Stomach (tissue), 19 donors: ENCODE measurements at regions of chr5 and their contacts with region 1.

Region 1: GRCh38 chr5:6623941-6624340 is 8.9 kb downstream of the NSUN2 start:
- DNase-seq: no peak
- H3K4me3 ChIP-seq: no peak overlapping the region
- H3K27ac ChIP-seq: no peak overlapping the region
- H3K4me1 ChIP-seq: no peaks in the 10 kb centered on the region
- H3K27me3 ChIP-seq: no peaks in the 10 kb centered on the region
- CTCF ChIP-seq: no peak
- EP300 ChIP-seq: no peak
- POLR2A ChIP-seq: no peak

Region 2: DNA sequence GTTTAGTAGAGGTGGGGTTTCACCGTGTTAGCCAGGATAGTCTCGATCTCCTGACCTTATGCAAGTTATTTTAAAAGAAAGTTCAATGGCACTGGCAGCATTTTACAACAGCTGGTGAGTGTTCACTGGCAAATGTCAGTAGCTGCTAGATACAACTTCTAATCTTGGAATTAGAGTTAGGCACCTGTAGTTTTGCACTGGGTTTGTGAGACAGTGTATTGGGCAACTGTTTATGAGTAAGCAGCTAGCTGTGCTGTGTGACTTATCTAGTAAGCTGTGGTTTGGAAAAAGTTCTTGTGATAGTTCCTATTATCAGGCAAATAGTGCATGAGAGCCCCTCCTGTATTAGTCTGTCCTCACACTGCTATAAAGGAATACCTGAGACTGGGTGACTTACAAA is 113.8 kb before region 1 on chr5:
- intact Hi-C with region 1: no loop called
- DNase-seq: no peak
- H3K4me3 ChIP-seq: no peak overlapping the region
- H3K27ac ChIP-seq: no peak overlapping the region
- H3K4me1 ChIP-seq: no peaks in the 10 kb centered on the region
- H3K27me3 ChIP-seq: no peaks in the 10 kb centered on the region
- CTCF ChIP-seq: no peak
- EP300 ChIP-seq: no peak
- POLR2A ChIP-seq: no peak

Region 3: DNA sequence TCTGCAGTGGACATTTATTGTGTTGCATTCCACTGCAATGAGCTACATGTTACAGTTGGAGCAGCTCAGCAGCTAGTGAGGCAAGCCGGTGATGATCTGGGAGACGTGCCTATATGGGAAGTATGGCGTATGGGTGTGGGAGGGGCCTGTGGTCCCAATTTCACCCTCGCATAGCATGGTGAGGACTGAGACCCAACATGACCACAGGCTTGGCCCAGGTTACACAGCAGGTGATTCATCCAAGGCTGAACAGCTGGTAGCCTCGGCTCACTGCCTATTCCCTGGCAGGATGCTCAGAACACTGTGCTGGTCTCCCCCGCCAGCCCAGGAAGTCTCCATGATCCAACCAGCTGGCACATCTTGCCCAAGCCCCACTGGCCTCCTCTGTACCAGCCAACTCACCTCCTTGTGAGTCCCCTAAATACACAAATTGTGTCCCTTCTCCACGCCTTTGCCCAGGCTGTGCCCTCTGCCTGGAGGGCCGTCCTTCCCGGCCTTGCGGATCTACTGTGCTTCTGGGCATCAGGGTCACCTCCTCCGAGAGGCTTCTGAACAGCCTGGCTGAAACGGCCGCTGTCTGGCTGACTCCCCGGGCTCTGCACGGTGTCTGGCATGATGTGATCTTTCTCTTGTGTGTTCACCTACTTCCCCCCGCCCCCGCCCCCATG is 72.5 kb before region 1 on chr5:
- intact Hi-C with region 1: no loop called
- DNase-seq: no peak
- H3K4me3 ChIP-seq: no peak overlapping the region
- H3K27ac ChIP-seq: no peak overlapping the region
- H3K4me1 ChIP-seq: no peaks in the 10 kb centered on the region
- H3K27me3 ChIP-seq: peaks cover 0 to 13% (median 0%) of the 10 kb centered on the region in 3 donors
- CTCF ChIP-seq: no peak
- EP300 ChIP-seq: no peak
- POLR2A ChIP-seq: no peak

Region 4: DNA sequence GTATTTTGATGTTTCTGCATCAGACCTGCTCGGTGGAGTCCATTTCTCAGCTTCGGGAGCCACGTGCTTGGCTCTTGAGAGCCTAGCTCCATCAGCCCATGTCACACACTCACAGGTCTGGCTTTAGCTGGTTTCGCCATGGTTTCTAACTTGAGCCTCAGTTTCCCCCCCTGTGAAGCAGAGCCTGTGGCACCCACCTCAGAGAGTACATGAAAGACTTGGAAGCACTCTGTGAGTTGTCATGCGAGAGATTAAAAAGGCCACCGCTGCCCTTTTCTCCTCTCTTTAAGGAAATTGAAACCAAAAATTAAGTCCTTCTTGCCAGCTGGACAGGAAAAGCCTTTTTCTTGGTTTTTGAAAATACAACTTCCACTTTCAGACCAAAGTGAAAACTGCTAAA is 98.1 kb after region 1 on chr5:
- intact Hi-C with region 1: no loop called
- DNase-seq: no peak
- H3K4me3 ChIP-seq: peak overlapping the region; percentile 19 to 35 (median 25)
- H3K27ac ChIP-seq: peak overlapping the region in 4 of 5 donors; percentile 46 to 74 (median 68)
- H3K4me1 ChIP-seq: peaks cover 55 to 99% (median 79%) of the 10 kb centered on the region in 4 donors
- H3K27me3 ChIP-seq: no peaks in the 10 kb centered on the region
- CTCF ChIP-seq: no peak
- EP300 ChIP-seq: no peak
- POLR2A ChIP-seq: no peak

Region 5: DNA sequence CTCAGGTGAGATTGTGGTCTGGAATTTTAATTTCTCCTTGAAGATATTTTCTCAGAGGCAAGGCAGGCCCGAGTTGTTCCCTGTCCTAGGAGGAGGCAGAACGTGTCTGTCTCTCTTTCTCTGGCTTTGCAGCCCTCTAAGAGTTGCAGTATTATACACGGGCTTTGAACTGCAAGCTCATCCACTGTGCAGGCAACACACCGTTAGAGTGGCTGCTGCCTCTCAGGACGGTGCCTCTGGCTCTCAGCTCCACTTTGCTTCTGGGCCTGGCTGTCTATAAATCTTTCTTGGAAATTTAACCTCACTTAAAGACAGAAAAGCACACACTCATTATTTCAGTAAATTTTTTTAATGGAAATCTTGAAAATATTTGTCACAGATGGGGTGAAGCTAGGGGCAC is 601.9 kb after region 1 on chr5:
- intact Hi-C with region 1: no loop called
- DNase-seq: no peak
- H3K4me3 ChIP-seq: no peak overlapping the region
- H3K27ac ChIP-seq: no peak overlapping the region
- H3K4me1 ChIP-seq: no peaks in the 10 kb centered on the region
- H3K27me3 ChIP-seq: no peaks in the 10 kb centered on the region
- CTCF ChIP-seq: no peak
- EP300 ChIP-seq: no peak
- POLR2A ChIP-seq: no peak

Region 6: DNA sequence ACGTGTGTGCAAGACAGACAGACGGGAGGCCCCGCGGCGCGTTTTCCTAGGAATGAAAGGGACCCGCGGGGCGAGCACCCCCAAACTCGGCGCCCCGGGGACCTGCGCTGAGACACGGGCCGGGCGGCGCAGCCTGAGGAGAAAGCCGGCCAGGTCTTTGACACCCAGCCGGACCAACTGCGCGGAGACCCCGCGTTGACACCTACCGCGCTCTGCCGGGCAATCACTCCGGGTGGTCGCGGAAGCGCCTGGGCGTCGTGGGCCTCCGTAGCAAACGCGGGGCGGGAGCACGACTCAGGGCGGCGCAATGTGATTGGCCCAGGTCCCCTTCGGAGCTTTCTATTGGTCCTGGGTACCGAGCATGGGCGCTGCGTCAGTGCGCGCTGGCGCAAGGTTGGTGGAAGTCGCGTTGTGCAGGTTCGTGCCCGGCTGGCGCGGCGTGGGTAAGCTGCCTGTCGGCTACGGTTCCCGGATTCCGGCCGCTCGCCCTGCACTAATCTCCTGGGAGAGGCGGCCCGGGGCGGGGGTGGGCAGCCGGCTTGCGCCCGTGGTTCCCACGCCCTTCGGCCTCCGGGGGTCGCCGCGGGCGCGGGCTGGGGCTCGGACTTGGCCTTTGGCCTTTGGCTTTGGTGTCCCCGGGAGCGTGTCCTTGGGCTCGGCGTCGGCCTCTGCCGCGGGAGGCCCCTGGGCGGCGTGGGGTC is 1245.0 kb after region 1 on chr5 and contains the starts of genes FASTKD3 and MTRR:
- intact Hi-C with region 1: loop called (anchors 10 kb)
- DNase-seq: peak; percentile 94 to 98
- H3K4me3 ChIP-seq: peak within 1 kb of the TSS; percentile 76 to 98 (median 93)
- H3K27ac ChIP-seq: peak within 1 kb of the TSS; percentile 86 to 95 (median 91)
- H3K4me1 ChIP-seq: peaks cover 11 to 65% (median 42%) of the 10 kb centered on the region in 4 donors
- H3K27me3 ChIP-seq: no peaks in the 10 kb centered on the region
- CTCF ChIP-seq: no peak
- EP300 ChIP-seq: no peak
- POLR2A ChIP-seq: peak in 1 of 4 donors; percentile 28
- total RNA-seq, gene FASTKD3: 0.58 to 13.0 (median 7.2) TPM in 4 of 5 donors, not detected in the other
- total RNA-seq, gene MTRR: 11.0 to 53.9 (median 51.3) TPM